ENCODE measurements at regions of chr2 and their contacts with region 1.

Region 1: GRCh38 chr2:20446917-20447436 is at the start of gene RHOB:
- DNase-seq: peak; percentile 97 to 98 (median 98)
- H3K4me3 ChIP-seq: peak within 1 kb of the TSS; percentile 76
- H3K27ac ChIP-seq: peak within 1 kb of the TSS; percentile 80 to 99
- H3K4me1 ChIP-seq: peaks cover 12% of the 10 kb centered on the region
- H3K27me3 ChIP-seq: no peaks in the 10 kb centered on the region
- CTCF ChIP-seq: peak in 2 of 3 donors; percentile 54 to 56
- EP300 ChIP-seq: peak; percentile 10
- POLR2A ChIP-seq: peak; percentile 99
- total RNA-seq, gene RHOB: 315 to 1,363 (median 467) TPM

Region 2: GRCh38 chr2:20490260-20491181 is 43.5 kb after region 1 on chr2:
- intact Hi-C with region 1: loop called in 1 of 4 experiments (anchors 5 kb)
- DNase-seq: peak; percentile 55 to 83 (median 73)
- H3K4me3 ChIP-seq: no peak overlapping the region
- H3K27ac ChIP-seq: no peak overlapping the region
- H3K4me1 ChIP-seq: no peaks in the 10 kb centered on the region
- H3K27me3 ChIP-seq: no peaks in the 10 kb centered on the region
- CTCF ChIP-seq: no peak
- EP300 ChIP-seq: no peak
- POLR2A ChIP-seq: no peak

Region 3: GRCh38 chr2:20578895-20579825 is 132.2 kb after region 1 on chr2:
- intact Hi-C with region 1: loop called in 1 of 4 experiments (anchors 5 kb)
- DNase-seq: peak; percentile 79 to 89 (median 85)
- H3K4me3 ChIP-seq: no peak overlapping the region
- H3K27ac ChIP-seq: peak overlapping the region; percentile 34 to 75
- H3K4me1 ChIP-seq: peaks cover 16% of the 10 kb centered on the region
- H3K27me3 ChIP-seq: no peaks in the 10 kb centered on the region
- CTCF ChIP-seq: no peak
- EP300 ChIP-seq: no peak
- POLR2A ChIP-seq: no peak

Region 4: GRCh38 chr2:20595431-20596192 is 148.6 kb after region 1 on chr2:
- intact Hi-C with region 1: loop called in 2 of 4 experiments (anchors 5 to 10 kb)
- DNase-seq: peak; percentile 14 to 41 (median 22)
- H3K4me3 ChIP-seq: no peak overlapping the region
- H3K27ac ChIP-seq: peak overlapping the region; percentile 39 to 63
- H3K4me1 ChIP-seq: peaks cover 41% of the 10 kb centered on the region
- H3K27me3 ChIP-seq: no peaks in the 10 kb centered on the region
- CTCF ChIP-seq: no peak
- EP300 ChIP-seq: no peak
- POLR2A ChIP-seq: no peak

Region 5: DNA sequence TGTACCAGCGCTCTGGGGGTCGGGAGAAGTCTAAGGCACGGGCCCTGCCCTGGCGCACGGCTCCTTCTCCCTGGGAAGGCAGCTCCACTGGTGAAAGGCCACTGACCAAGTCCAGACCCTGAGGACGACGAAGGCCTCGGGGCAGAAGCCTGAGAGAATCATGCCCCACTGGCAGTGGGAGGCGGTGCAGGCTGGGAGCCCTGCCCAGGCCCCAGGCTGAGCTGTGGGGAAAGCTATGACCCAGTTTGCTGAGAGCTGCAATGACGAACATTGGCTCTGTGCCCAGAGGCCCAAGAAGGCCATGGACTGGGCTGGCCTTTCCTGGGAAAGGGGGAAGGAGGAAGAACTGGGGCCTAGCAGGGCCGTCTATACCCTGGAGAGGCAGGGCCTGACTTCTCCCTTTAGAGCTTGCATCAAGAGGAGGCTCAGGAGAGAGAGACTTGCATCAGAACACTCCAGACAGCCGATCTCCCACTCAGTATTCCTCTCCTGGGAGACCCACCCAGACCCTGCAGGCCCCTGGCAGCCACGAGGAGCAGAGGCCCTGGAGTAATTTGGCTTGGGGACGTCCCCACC is 171.0 kb after region 1 on chr2:
- intact Hi-C with region 1: loop called in 3 of 4 experiments (anchors 5 kb)
- DNase-seq: peak; percentile 98 to 100 (median 99)
- H3K4me3 ChIP-seq: no peak overlapping the region
- H3K27ac ChIP-seq: peak overlapping the region; percentile 79 to 90
- H3K4me1 ChIP-seq: peaks cover 40% of the 10 kb centered on the region
- H3K27me3 ChIP-seq: no peaks in the 10 kb centered on the region
- CTCF ChIP-seq: peak; percentile 77 to 94 (median 81)
- EP300 ChIP-seq: peak; percentile 88
- POLR2A ChIP-seq: no peak

Region 6: DNA sequence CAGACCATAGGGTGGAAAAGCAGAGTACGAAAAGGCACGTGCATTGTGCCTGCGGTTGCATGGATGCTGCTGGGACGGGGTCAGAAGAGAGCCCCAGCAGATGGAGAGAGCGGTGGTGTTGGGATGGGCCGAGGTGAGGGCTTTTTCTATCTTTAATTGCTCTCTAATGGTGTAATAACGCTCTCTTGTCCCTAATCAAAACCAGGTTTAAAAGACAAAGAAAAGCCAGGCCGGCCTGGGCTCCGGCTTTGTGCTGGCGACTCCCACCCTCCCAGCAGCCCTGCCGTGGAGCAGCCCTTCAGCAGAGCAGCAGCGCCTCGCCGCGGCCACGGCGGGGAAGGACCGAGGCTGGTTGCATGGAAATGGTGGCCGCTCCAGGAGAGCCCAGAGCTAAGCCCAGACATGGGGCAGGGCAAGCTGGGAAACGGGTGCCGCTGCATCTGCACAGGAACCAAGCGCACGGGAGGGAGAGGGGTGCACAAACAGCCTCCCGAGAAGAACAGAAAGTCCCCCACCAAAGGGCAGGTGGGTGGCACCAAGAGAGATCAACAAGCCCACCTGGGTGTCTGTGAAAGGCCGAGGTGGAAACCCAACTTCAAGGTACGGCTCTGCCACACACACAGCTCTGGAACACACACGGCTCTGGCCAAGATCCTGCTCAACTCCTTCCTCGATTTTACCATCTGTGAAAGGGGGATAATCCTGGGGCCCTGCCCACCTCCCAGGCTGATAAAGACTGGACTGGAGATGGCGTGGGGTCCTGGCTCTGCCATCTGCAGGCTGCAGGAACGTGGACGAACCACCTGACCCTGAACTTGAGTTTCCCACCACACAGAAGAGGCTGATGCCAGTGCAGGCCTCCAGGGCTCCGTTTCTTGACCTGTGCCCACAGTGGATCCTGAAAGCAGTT is 189.0 kb after region 1 on chr2:
- intact Hi-C with region 1: loop called (anchors 2 kb)
- DNase-seq: peak; percentile 85 to 93 (median 91)
- H3K4me3 ChIP-seq: no peak overlapping the region
- H3K27ac ChIP-seq: peak overlapping the region in 1 of 2 donors; percentile 33
- H3K4me1 ChIP-seq: peaks cover 4% of the 10 kb centered on the region
- H3K27me3 ChIP-seq: no peaks in the 10 kb centered on the region
- CTCF ChIP-seq: peak; percentile 78 to 98 (median 95)
- EP300 ChIP-seq: peak; percentile 3
- POLR2A ChIP-seq: peak; percentile 15

Measured in ovary (tissue), 10 donors.